Activated CD8-positive, alpha-beta T cell treated with anti-CD3 and anti-CD28 coated beads for 36 hours (primary cell): ENCODE measurements at regions of chr12 and their contacts with region 1.

Region 1: DNA sequence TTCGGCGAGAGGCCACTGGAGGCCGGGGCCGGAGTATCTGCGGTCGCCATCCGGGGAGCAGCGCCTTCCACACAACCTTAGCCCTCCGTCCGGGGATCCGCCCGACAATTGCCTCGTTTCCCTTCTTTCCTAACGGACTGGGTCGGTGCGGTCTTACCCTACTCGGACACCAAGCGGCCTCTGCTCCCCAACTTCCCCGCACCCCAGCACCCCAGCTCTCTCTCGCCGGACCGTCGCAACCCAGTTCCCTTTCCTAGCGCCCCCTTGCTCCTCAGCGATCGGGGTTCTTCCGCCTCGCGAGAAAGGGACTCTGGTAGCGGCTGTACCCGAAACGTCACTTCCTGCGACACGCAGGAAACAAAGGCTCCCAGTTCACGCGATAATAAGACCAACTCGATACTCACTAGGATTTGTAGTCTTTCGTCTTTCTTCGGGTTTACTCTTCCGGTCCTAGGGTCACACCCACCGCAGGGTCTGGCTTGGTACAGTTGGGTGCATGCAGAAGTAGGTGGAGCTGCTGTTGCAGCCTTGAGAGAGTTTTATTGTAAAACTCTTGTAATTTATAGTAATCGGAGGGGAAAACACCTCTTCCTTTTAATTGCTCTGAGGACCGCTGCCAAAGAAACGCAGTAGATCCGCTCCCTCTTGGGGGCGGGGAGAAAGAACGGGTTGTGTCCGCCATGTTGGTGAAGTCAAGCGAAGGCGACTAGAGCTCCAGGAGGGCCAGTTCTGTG is at the start of gene ZFC3H1:
- DNase-seq: peak; percentile 95
- ATAC-seq: peak; percentile 85
- H3K4me3 Mint-ChIP-seq: peak within 1 kb of the TSS; percentile 100
- H3K27ac Mint-ChIP-seq: peak within 1 kb of the TSS; percentile 100
- H3K4me1 Mint-ChIP-seq: peaks cover 35% of the 10 kb centered on the region
- H3K27me3 Mint-ChIP-seq: no peaks in the 10 kb centered on the region
- CTCF ChIP-seq: no peak
- total RNA-seq, gene ZFC3H1: 47.1 to 58.4 TPM

Region 2: DNA sequence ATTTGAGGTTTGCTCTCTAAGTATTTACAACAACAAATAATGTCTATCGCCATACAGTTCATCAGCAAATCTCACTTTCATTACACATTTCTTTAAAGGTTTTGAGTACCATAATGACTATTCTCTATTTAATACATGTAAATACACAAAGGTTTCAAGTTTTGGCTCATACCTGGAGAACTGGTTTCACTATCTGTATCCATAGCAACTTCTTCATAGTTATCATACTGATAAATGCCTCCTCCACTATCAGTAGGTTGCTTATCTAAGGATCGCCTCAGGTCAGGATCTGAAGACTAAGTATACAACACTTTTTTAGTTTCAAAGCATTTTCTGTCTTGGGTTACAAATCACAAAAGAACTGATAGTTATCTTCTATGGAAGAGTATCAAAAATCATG is 21.5 kb before region 1 on chr12:
- CTCF ChIA-PET with region 1: interaction called, 6 read pairs
- POLR2A ChIA-PET with region 1: interaction called, 19 read pairs
- intact Hi-C with region 1: no loop called
- DNase-seq: no peak
- ATAC-seq: peak; percentile 46
- H3K4me3 Mint-ChIP-seq: no peak overlapping the region
- H3K27ac Mint-ChIP-seq: peak overlapping the region; percentile 19
- H3K4me1 Mint-ChIP-seq: peaks cover 28% of the 10 kb centered on the region
- H3K27me3 Mint-ChIP-seq: no peaks in the 10 kb centered on the region
- CTCF ChIP-seq: no peak

Region 3: GRCh38 chr12:71685914-71686665 is 22.4 kb after region 1 on chr12 and contains the start of gene TMEM19:
- CTCF ChIA-PET with region 1: interaction called, 27 read pairs
- POLR2A ChIA-PET with region 1: interaction called, 75 read pairs
- intact Hi-C with region 1: loop called (anchors 2 kb)
- DNase-seq: peak; percentile 86
- ATAC-seq: peak; percentile 89
- H3K4me3 Mint-ChIP-seq: peak within 1 kb of the TSS; percentile 94
- H3K27ac Mint-ChIP-seq: peak within 1 kb of the TSS; percentile 94
- H3K4me1 Mint-ChIP-seq: peaks cover 19% of the 10 kb centered on the region
- H3K27me3 Mint-ChIP-seq: no peaks in the 10 kb centered on the region
- CTCF ChIP-seq: no peak
- total RNA-seq, gene TMEM19: 14.2 to 16.5 TPM

Region 4: DNA sequence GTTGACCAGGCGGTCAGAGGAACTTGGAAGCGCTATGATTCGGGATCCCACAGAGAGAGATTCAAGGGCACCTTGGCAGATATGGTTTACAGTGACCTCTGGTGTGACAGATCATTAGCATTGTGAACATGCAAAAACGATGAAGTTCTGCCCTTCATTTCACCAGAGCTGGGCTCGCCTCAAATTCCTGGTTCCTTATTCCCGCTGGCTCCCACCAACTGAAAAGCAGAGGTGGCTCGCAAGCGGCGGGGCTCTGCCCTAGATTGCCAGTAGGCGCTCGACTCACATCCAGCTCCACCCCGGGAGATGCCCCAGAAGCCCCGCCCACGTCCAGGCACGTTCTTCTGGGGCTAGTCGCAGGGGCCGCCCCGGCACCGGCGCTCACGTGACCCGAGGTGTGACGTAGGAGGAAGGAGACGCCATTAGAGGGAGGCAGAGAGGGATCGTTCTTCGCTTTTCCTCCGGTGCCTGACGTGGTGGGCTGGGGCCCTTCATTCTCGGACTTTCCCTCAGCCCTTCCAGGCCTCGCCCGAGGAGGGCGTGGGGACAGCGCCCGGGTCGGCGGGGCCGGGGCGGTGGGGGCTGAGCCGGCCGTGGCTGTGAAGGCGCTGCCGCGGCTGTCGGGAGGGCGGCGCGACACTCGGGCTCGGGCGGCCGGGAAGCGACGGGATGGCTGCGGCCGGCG is 90.9 kb after region 1 on chr12 and contains the start of gene RAB21:
- CTCF ChIA-PET with region 1: interaction called, 6 read pairs
- POLR2A ChIA-PET with region 1: interaction called, 29 read pairs
- intact Hi-C with region 1: loop called (anchors 2 kb)
- DNase-seq: peak; percentile 99
- ATAC-seq: peak; percentile 93
- H3K4me3 Mint-ChIP-seq: peak within 1 kb of the TSS; percentile 92
- H3K27ac Mint-ChIP-seq: peak within 1 kb of the TSS; percentile 99
- H3K4me1 Mint-ChIP-seq: peaks cover 33% of the 10 kb centered on the region
- H3K27me3 Mint-ChIP-seq: peaks cover 6% of the 10 kb centered on the region
- CTCF ChIP-seq: no peak
- total RNA-seq, gene RAB21: 78.1 to 88.6 TPM

Region 5: DNA sequence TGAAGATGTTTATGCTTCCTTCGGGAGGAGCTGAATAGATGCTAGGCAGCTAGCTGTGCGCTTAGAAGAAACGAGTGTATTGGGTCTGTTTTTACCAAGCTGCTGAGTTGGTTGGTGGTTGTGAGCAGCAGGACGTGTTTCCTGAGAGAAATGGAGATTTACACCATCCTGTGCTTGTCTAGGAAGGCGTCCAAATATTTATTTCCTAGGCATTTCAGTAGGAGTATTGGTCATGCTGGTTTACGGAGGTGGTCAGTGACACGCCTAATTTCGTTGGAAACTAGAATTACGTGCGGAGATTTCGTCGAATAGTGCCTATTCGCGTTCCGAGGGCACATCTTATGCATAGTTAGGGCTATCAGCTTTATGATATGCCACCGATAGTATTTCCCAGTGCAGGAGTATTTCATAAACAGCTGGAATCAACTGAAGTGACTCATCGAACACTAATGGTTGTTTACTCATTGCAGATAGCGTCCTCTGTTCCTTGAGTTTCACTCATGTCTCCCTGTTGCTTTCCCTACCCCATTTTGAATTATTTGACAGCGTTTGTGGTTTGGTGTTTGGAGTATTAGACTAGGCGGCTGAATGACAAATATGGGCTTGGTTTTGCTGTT is 176.6 kb after region 1 on chr12:
- CTCF ChIA-PET with region 1: no interaction called
- POLR2A ChIA-PET with region 1: interaction called, 18 read pairs
- intact Hi-C with region 1: loop called (anchors 10 kb)
- DNase-seq: peak; percentile 21
- ATAC-seq: peak; percentile 22
- H3K4me3 Mint-ChIP-seq: peak overlapping the region; percentile 93
- H3K27ac Mint-ChIP-seq: peak overlapping the region; percentile 97
- H3K4me1 Mint-ChIP-seq: peaks cover 32% of the 10 kb centered on the region
- H3K27me3 Mint-ChIP-seq: no peaks in the 10 kb centered on the region
- CTCF ChIP-seq: no peak